AG04449 (cell line): ENCODE measurements at regions of chr19 and their contacts with region 1.

Region 1: GRCh38 chr19:11964858-11965645 is at the start of gene ZNF763:
- DNase-seq: no peak
- H3K4me3 ChIP-seq: peak within 1 kb of the TSS; percentile 80
- CTCF ChIP-seq: no peak

Region 2: GRCh38 chr19:11781295-11782052 is 183.6 kb before region 1 on chr19:
- CTCF ChIA-PET with region 1: no interaction called
- POLR2A ChIA-PET with region 1: no interaction called
- DNase-seq: no peak
- H3K4me3 ChIP-seq: no peak overlapping the region
- CTCF ChIP-seq: no peak

Region 3: GRCh38 chr19:11942843-11943108 is 22.3 kb before region 1 on chr19:
- CTCF ChIA-PET with region 1: interaction called, 15 read pairs
- POLR2A ChIA-PET with region 1: no interaction called
- DNase-seq: no peak
- H3K4me3 ChIP-seq: no peak overlapping the region
- CTCF ChIP-seq: no peak

Region 4: GRCh38 chr19:11949201-11949600 is 15.9 kb before region 1 on chr19:
- CTCF ChIA-PET with region 1: interaction called, 23 read pairs
- POLR2A ChIA-PET with region 1: no interaction called
- DNase-seq: no peak
- H3K4me3 ChIP-seq: no peak overlapping the region
- CTCF ChIP-seq: no peak

Region 5: GRCh38 chr19:11987405-11988281 is 22.6 kb after region 1 on chr19:
- CTCF ChIA-PET with region 1: interaction called, 67 read pairs
- POLR2A ChIA-PET with region 1: interaction called, 5 read pairs
- DNase-seq: no peak
- H3K4me3 ChIP-seq: peak overlapping the region; percentile 92
- CTCF ChIP-seq: no peak